A673 (cell line): ENCODE measurements at regions of chr18 and their contacts with region 1.

Region 1: GRCh38 chr18:14086458-14087231 is 45.6 kb downstream of the ZNF519 start:
- DNase-seq: peak; percentile 69
- H3K4me3 ChIP-seq: no peak overlapping the region
- H3K27ac ChIP-seq: no peak overlapping the region
- H3K4me1 ChIP-seq: peaks cover 4% of the 10 kb centered on the region
- H3K27me3 ChIP-seq: no peaks in the 10 kb centered on the region
- CTCF ChIP-seq: peak; percentile 89

Region 2: DNA sequence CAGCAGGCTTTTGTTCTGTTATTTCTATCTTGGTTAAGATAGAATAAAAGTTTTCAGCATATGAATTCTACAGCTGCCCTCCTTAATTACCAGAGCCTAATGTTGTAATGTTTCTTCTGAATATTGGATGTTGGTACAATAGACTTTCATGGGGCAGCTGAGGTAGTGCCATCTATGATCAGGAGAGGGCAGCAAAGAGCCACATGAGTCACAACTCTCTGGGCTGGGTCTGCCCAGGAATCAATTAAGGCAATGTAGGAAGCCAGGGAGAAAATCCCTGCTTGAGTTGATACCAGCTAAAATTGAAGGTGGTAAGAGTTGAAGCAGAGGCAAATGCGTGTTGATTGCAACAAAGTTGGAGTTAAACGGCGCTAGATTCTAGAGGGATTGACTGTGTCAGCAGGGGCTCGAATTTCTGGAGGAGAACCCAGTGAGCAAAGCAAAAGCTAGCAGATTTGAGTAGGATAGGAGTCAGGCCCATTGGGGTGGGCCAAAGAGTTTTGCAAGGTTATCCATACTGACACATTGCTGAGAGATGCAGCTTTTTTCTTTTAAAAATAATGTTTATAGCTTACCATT is 273.3 kb before region 1 on chr18:
- CTCF ChIA-PET with region 1: interaction called, 4 read pairs
- POLR2A ChIA-PET with region 1: no interaction called
- intact Hi-C with region 1: loop called (anchors 1 kb)
- DNase-seq: peak; percentile 77
- H3K4me3 ChIP-seq: no peak overlapping the region
- H3K27ac ChIP-seq: no peak overlapping the region
- H3K4me1 ChIP-seq: no peaks in the 10 kb centered on the region
- H3K27me3 ChIP-seq: peaks cover 10% of the 10 kb centered on the region
- CTCF ChIP-seq: peak; percentile 88

Region 3: GRCh38 chr18:13823707-13824395 is 262.8 kb before region 1 on chr18 and contains the start of gene MC5R:
- CTCF ChIA-PET with region 1: interaction called, 3 read pairs
- POLR2A ChIA-PET with region 1: no interaction called
- intact Hi-C with region 1: loop called (anchors 1 kb)
- DNase-seq: peak; percentile 74
- H3K4me3 ChIP-seq: peak within 1 kb of the TSS; percentile 29
- H3K27ac ChIP-seq: no peak within 1 kb of the TSS
- H3K4me1 ChIP-seq: no peaks in the 10 kb centered on the region
- H3K27me3 ChIP-seq: peaks cover 35% of the 10 kb centered on the region
- CTCF ChIP-seq: peak; percentile 91
- total RNA-seq, gene MC5R: not detected in 2 replicates